ENCODE measurements at regions of chr4 and their contacts with region 1.

Region 1: DNA sequence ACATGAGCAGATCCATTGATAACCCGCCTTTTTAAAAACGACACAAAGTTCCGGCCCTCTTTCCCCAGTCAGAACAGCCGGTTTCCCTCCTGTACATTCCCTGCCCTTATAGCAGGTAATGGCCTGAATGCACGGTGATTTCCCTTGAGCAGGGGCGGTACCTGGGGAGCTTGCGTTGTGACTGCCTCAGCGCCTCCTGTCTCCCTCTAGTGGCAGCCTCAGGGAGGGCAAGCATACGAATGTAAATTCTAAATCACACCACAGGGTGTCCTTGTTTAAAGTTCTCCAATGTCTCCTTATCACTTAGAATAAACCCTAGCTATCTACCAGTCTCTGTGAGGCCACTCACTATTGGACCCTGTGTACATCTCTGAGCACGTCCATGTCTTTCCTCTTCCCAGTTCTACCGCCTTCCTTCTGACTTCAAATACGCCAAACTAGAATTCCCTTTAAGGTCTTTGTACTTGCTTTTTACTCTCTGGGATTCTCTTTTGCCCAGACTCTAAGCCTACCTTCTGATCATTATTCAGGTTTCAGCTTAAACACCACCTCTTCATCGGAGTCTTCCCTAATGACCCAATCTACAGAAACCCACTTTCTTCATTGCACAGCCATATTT is 18.4 kb upstream of the LDB2 start:
- DNase-seq: peak; percentile 81
- H3K4me3 Mint-ChIP-seq: no peak overlapping the region
- H3K27ac Mint-ChIP-seq: no peak overlapping the region
- H3K4me1 Mint-ChIP-seq: no peaks in the 10 kb centered on the region
- H3K27me3 Mint-ChIP-seq: no peaks in the 10 kb centered on the region
- CTCF ChIP-seq: peak; percentile 94

Region 2: GRCh38 chr4:16516796-16517439 is 399.9 kb before region 1 on chr4:
- CTCF ChIA-PET with region 1: interaction called, 8 read pairs
- POLR2A ChIA-PET with region 1: no interaction called
- intact Hi-C with region 1: loop called (anchors 1 kb)
- DNase-seq: peak; percentile 72
- H3K4me3 Mint-ChIP-seq: no peak overlapping the region
- H3K27ac Mint-ChIP-seq: no peak overlapping the region
- H3K4me1 Mint-ChIP-seq: no peaks in the 10 kb centered on the region
- H3K27me3 Mint-ChIP-seq: peaks cover 80% of the 10 kb centered on the region
- CTCF ChIP-seq: peak; percentile 29

Region 3: DNA sequence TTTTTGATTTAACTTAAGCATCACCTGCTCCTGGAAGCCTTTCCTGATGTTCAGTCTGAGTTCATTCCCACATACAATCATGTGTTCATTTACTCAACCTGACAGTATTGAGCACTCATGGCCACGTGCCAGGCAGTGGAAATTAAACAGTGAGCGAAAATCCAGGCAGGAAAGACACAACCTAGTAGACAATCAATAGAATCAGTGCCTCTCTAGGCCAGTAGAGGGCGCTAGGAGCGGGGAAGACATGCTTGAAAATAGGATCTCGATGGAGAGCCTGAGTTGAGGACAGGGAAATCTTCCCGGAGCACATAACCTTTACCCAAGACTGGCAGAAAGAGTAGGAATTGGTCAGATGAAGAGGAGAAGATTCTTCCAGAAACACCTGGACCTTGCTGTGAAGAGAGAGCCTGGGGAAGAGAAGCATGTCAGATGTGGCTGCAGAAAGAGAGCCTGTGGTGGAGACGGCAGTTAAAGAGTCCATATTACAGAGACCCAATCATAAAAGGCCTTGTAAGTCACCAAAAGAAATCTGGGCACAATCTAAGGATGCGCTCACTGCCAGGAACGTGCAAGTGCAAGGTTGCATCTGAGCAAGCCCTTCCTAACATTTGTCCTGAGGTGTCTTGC is 121.9 kb before region 1 on chr4:
- CTCF ChIA-PET with region 1: interaction called, 5 read pairs
- POLR2A ChIA-PET with region 1: no interaction called
- intact Hi-C with region 1: loop called (anchors 2 kb)
- DNase-seq: peak; percentile 64
- H3K4me3 Mint-ChIP-seq: no peak overlapping the region
- H3K27ac Mint-ChIP-seq: no peak overlapping the region
- H3K4me1 Mint-ChIP-seq: no peaks in the 10 kb centered on the region
- H3K27me3 Mint-ChIP-seq: peaks cover 23% of the 10 kb centered on the region
- CTCF ChIP-seq: peak; percentile 75